ENCODE measurements at regions of chr12 and their contacts with region 1.

Region 1: DNA sequence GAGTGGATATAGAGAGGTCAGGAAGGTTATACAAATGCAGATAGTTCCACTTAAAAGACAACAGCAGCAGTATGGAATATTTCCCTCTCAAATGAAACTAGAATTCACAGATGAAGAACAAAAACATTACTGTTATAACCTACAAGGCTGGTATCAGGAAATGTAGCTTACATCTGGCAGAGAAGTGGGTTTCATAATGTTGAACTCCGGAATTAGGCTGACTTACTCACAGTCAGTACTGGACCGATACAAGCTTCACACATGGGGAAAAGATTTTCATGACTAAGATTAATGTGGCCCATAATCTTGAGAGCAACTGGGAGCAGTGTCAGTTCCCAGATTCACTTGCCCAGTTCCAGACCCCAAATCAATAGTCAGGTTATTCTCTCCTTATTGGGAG is 353.9 kb downstream of the DUSP6 start:
- DNase-seq: no peak
- ATAC-seq: no peak
- H3K4me3 ChIP-seq: no peak overlapping the region
- H3K27ac ChIP-seq: no peak overlapping the region
- H3K4me1 ChIP-seq: no peaks in the 10 kb centered on the region
- H3K27me3 ChIP-seq: no peaks in the 10 kb centered on the region
- CTCF ChIP-seq: no peak
- POLR2A ChIP-seq: no peak

Region 2: DNA sequence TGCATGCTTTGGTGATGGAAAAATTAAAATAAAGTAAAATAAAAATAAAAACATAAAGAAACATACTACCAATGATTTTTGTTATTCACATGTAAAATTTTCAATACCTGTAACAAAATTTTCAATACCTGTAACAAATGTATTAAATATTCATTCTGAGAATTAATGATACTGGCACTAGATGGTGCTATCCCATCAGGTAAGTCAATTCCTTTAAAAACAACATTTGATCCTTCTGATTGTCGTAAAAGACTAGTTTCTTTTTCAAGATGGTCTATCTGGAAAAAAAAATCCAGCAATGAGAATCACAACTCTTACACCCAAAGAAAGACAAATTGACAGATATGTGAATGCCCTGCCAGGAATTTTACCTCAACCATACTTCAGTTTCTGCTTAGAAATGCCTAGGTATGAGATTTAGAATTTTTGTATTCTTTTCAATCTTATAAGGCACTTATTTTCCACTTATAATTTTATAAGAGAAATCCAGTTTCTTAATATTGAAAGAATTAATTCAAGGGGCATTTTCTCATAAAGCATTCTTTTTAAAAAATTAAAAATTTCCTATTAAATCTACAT is 887.3 kb before region 1 on chr12:
- intact Hi-C with region 1: loop called (anchors 5 kb)
- DNase-seq: no peak
- ATAC-seq: peak; percentile 60
- H3K4me3 ChIP-seq: no peak overlapping the region
- H3K27ac ChIP-seq: no peak overlapping the region
- H3K4me1 ChIP-seq: no peaks in the 10 kb centered on the region
- H3K27me3 ChIP-seq: no peaks in the 10 kb centered on the region
- CTCF ChIP-seq: peak; percentile 16 to 71 (median 60)
- POLR2A ChIP-seq: no peak

Measured in body of pancreas (tissue), 4 donors.